ENCODE measurements at regions of chr6 and their contacts with region 1.

Region 1: GRCh38 chr6:15439410-15440025 is 193.6 kb downstream of the JARID2 start:
- DNase-seq: no peak
- H3K4me3 ChIP-seq: no peak overlapping the region
- H3K4me3 Mint-ChIP-seq: no peak overlapping the region
- H3K27ac ChIP-seq: peak overlapping the region in 1 of 2 donors; percentile 18
- H3K27ac Mint-ChIP-seq: peak overlapping the region in 6 of 7 donors; percentile 13 to 50 (median 36)
- H3K4me1 ChIP-seq: peaks cover 78 to 89% of the 10 kb centered on the region in 2 donors
- H3K4me1 Mint-ChIP-seq: peaks cover 95% of the 10 kb centered on the region
- H3K27me3 ChIP-seq: no peaks in the 10 kb centered on the region
- H3K27me3 Mint-ChIP-seq: no peaks in the 10 kb centered on the region
- CTCF ChIP-seq: no peak

Region 2: DNA sequence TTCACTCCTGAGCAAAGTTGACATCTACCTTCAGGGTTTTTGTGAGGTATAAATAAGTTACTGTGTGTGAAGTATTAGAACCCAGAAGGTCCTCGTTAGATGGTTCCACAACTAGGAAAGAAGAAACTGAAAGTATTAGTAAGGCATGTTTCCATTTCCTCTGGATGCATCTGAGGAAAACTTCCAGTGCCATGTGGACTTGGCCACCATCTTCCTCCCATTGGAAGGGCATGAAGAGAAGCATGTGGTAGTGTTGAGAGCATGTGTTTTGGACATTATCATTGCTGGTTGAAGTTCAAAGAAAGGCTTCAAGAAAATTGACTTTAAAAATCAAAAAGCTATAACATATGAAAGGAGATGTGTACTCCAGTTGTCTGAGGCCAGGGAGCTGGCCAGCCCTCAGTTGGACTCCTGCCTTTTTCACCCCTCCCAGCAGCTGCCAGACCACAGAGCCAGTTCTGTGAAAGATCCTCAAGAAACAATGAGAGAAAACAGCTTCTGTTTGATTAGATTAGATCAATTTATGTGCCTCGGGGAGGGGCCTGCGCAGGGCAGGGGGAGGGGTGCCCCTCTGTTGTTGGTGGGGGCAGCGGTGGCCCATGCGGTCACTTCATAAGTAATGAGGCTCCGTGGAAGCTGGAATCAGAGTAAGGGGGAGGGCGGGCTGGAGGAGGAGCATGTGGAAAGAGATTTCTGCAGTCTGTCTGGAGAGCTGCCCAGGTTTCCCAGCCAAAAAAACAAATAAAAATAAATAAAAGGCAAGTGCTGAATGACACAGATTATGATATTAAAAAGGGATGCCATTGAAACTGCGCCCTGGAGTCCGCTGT is 39.7 kb before region 1 on chr6:
- intact Hi-C with region 1: loop called (anchors 5 kb)
- DNase-seq: no peak
- H3K4me3 ChIP-seq: peak overlapping the region in 1 of 3 experiments; percentile 52
- H3K4me3 Mint-ChIP-seq: peak overlapping the region; percentile 52 to 90
- H3K27ac ChIP-seq: peak overlapping the region in 1 of 2 donors; percentile 8
- H3K27ac Mint-ChIP-seq: peak overlapping the region in 6 of 7 donors; percentile 56 to 82 (median 66)
- H3K4me1 ChIP-seq: peaks cover 68 to 69% of the 10 kb centered on the region in 2 donors
- H3K4me1 Mint-ChIP-seq: peaks cover 75% of the 10 kb centered on the region
- H3K27me3 ChIP-seq: no peaks in the 10 kb centered on the region
- H3K27me3 Mint-ChIP-seq: peaks cover 0 to 2% (median 0%) of the 10 kb centered on the region in 3 donors
- CTCF ChIP-seq: no peak

Region 3: GRCh38 chr6:16238963-16239797 is 799.7 kb after region 1 on chr6:
- intact Hi-C with region 1: no loop called
- DNase-seq: peak in 2 of 3 donors; percentile 18 to 22
- H3K4me3 ChIP-seq: peak overlapping the region; percentile 79 to 89 (median 80)
- H3K4me3 Mint-ChIP-seq: peak overlapping the region; percentile 97
- H3K27ac ChIP-seq: peak overlapping the region in 1 of 2 donors; percentile 61
- H3K27ac Mint-ChIP-seq: peak overlapping the region; percentile 58 to 86 (median 72)
- H3K4me1 ChIP-seq: peaks cover 44 to 47% of the 10 kb centered on the region in 2 donors
- H3K4me1 Mint-ChIP-seq: peaks cover 37% of the 10 kb centered on the region
- H3K27me3 ChIP-seq: peaks cover 0 to 29% of the 10 kb centered on the region in 2 donors
- H3K27me3 Mint-ChIP-seq: peaks cover 18 to 39% (median 27%) of the 10 kb centered on the region in 3 donors
- CTCF ChIP-seq: peak; percentile 62